Caco-2 (cell line): ENCODE measurements at regions of chr7 and their contacts with region 1.

Region 1: GRCh38 chr7:19463581-19463980 is 245.3 kb downstream of the POLR1F start:
- DNase-seq: no peak
- H3K4me3 ChIP-seq: no peak overlapping the region
- H3K4me3 Mint-ChIP-seq: no peak overlapping the region
- H3K27ac Mint-ChIP-seq: no peak overlapping the region
- H3K4me1 ChIP-seq: no peaks in the 10 kb centered on the region
- H3K4me1 Mint-ChIP-seq: no peaks in the 10 kb centered on the region
- H3K27me3 ChIP-seq: no peaks in the 10 kb centered on the region
- H3K27me3 Mint-ChIP-seq: no peaks in the 10 kb centered on the region
- CTCF ChIP-seq: no peak

Region 2: DNA sequence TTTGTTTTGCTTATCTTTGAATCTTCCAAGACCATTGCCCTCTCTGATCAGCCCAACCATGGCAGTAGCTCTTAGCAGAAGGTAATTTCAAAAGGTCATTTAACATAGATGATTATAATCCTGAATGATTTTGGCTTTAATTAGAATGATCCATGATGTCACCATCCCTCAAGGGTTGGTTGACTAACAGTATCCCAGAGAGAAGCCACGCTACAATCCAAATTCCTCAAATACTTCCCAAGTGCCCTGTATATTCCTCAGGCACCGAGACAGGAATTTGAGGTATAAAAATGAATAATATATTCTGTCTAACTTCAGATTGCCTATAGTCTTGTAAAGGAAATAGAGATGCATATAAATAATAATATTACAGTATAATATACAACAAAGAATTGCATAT is 352.0 kb after region 1 on chr7:
- CTCF ChIA-PET with region 1: interaction called, 10 read pairs
- POLR2A ChIA-PET with region 1: no interaction called
- intact Hi-C with region 1: no loop called
- DNase-seq: no peak
- H3K4me3 ChIP-seq: no peak overlapping the region
- H3K4me3 Mint-ChIP-seq: no peak overlapping the region
- H3K27ac Mint-ChIP-seq: no peak overlapping the region
- H3K4me1 ChIP-seq: no peaks in the 10 kb centered on the region
- H3K4me1 Mint-ChIP-seq: peaks cover 8% of the 10 kb centered on the region
- H3K27me3 ChIP-seq: no peaks in the 10 kb centered on the region
- H3K27me3 Mint-ChIP-seq: no peaks in the 10 kb centered on the region
- CTCF ChIP-seq: no peak